HEK293T (cell line): ENCODE measurements at regions of chr3 and their contacts with region 1.

Region 1: GRCh38 chr3:48989796-48990635 is at the start of gene P4HTM:
- DNase-seq: no peak

Region 2: GRCh38 chr3:49007068-49007770 is 17.2 kb after region 1 on chr3 and contains the start of gene WDR6:
- CTCF ChIA-PET with region 1: interaction called, 7 read pairs
- POLR2A ChIA-PET with region 1: interaction called, 103 read pairs
- DNase-seq: peak; percentile 97

Region 3: GRCh38 chr3:49013755-49014628 is 24.0 kb after region 1 on chr3:
- CTCF ChIA-PET with region 1: interaction called, 18 read pairs
- POLR2A ChIA-PET with region 1: interaction called, 77 read pairs
- DNase-seq: peak; percentile 50

Region 4: DNA sequence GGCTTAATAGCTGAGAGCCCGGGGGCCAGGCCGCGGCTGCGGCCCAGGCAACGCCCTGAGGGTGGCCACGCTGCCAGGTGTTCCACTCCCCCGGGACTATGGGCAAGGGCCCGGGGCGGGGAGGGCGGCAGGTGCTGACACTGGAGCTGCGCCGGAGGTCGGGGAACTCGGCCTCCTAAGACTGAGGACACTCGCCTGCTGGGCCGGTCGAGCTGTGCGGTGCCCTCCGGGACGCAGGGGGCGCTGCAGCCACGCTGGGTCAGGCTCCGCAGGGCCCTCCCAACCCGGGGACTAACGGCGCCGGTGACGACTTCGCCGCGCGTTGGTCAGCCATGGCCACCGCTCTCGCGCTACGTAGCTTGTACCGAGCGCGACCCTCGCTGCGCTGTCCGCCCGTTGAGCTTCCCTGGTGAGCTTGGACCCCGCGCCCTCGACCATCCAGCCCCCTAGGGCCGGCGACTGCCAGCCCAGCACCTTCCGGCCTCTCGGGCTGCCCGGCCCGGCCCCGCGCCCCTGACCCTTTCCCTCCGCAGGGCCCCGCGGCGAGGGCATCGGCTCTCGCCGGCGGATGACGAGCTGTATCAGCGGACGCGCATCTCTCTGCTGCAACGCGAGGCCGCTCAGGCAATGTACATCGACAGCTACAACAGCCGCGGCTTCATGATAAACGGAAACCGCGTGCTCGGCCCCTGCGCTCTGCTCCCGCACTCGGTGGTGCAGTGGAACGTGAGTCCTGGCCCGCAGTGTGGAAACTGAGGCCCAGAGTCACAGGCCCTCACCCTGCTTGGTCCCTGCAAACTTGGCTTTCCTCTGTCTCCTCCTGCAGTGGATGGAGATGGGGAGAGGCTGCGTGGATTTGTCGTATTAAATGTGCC is 32.0 kb after region 1 on chr3 and contains the start of gene NDUFAF3:
- CTCF ChIA-PET with region 1: interaction called, 6 read pairs
- POLR2A ChIA-PET with region 1: interaction called, 77 read pairs
- DNase-seq: peak; percentile 85

Region 5: GRCh38 chr3:49028673-49029562 is 38.9 kb after region 1 on chr3 and contains the start of gene IMPDH2:
- CTCF ChIA-PET with region 1: interaction called, 6 read pairs
- POLR2A ChIA-PET with region 1: interaction called, 77 read pairs
- DNase-seq: peak; percentile 95